Motor neuron (in vitro differentiated cells): ENCODE measurements at regions of chr12 and their contacts with region 1.

Region 1: GRCh38 chr12:63843721-63844390 is 644 bp upstream of the SRGAP1 start:
- ATAC-seq: peak; percentile 86 to 91 (median 89)
- H3K4me3 ChIP-seq: peak overlapping the region; percentile 58 to 96 (median 71)
- H3K27ac ChIP-seq: peak overlapping the region; percentile 13 to 55
- H3K4me1 ChIP-seq: peaks cover 4 to 9% of the 10 kb centered on the region in 2 donors

Region 2: GRCh38 chr12:63888908-63889635 is 45.2 kb after region 1 on chr12:
- in situ Hi-C with region 1: no loop called
- ATAC-seq: peak; percentile 32 to 96 (median 58)
- H3K4me3 ChIP-seq: no peak overlapping the region
- H3K27ac ChIP-seq: no peak overlapping the region
- H3K4me1 ChIP-seq: peaks cover 0 to 7% of the 10 kb centered on the region in 2 donors

Region 3: DNA sequence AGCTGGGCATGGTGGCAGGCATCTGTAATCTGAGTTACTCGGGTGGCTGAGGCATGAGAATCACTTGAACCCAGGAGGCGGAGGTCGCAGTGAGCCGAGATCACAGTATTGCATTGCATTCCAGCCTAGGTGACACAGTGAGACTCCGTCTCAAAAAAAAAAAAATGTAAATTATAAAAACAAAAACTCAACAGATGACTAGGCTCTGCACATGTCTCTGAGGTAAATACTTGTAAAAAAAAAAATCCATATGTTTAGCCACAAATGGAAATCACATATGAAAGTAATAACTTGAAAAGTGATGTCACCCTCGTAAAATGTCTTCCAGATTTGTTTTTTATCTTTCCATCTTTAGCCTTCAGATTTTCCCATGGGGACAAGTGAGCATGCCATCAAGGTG is 293.3 kb after region 1 on chr12:
- in situ Hi-C with region 1: no loop called
- ATAC-seq: no peak
- H3K4me3 ChIP-seq: no peak overlapping the region
- H3K27ac ChIP-seq: no peak overlapping the region
- H3K4me1 ChIP-seq: no peaks in the 10 kb centered on the region

Region 4: DNA sequence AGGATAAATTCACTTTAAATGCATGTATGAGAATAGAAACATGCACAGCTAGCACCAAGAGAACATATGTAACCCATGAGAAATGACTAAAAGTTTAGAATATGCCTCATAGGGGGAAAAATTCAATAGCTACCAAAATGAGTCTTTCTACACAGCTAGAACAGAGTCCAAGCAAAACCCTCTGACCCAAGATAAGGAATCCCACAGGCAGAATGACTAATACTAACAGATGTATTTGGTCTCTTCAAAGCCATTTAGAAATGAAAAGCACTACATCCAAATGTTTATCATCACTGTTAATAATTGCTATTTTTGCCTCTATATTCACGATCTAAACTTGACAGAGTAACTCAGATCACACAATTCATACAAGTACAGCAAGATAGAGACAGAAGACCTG is 334.3 kb after region 1 on chr12:
- in situ Hi-C with region 1: loop called in 1 of 9 experiments (anchors 10 kb)
- ATAC-seq: no peak
- H3K4me3 ChIP-seq: no peak overlapping the region
- H3K27ac ChIP-seq: no peak overlapping the region
- H3K4me1 ChIP-seq: peaks cover 11 to 12% of the 10 kb centered on the region in 2 donors

Region 5: GRCh38 chr12:64236549-64236948 is 392.7 kb after region 1 on chr12:
- in situ Hi-C with region 1: loop called in 1 of 9 experiments (anchors 25 kb)
- ATAC-seq: peak in 1 of 8 experiments; percentile 24
- H3K4me3 ChIP-seq: no peak overlapping the region
- H3K27ac ChIP-seq: no peak overlapping the region
- H3K4me1 ChIP-seq: no peaks in the 10 kb centered on the region

Region 6: DNA sequence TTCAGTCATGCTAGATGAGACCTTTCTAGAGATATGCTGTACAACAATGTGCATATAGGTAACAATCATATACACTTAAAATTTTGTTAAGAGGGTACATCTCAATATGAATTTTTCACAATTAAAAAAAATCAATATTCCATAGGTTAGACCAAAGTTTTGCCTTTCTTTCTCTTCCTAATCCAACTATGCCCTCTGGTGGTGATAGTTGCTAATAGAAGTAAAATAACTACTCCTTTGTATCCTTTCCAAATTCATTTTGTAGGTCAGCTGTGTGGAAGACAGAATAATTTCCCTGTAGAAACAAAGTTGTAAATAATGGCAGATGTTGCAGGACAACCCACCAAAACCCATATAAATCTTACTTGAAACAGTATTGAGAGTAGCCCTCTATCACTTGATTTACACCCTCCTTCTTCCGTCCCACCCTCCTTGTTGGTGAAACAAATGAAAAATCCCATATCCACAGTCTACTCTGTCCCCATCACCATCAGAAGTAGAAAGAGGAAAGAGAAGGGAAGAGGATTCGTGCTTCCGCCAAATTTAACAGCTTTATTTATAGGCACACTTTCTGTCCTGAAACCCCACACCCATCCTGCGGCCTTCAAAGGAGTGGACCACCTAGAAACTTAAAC is 412.4 kb after region 1 on chr12:
- in situ Hi-C with region 1: loop called in 8 of 9 experiments (anchors 10 to 25 kb)
- ATAC-seq: peak in 4 of 8 experiments; percentile 21 to 43 (median 24)
- H3K4me3 ChIP-seq: no peak overlapping the region
- H3K27ac ChIP-seq: no peak overlapping the region
- H3K4me1 ChIP-seq: no peaks in the 10 kb centered on the region

Region 7: GRCh38 chr12:64392221-64392620 is 548.4 kb after region 1 on chr12:
- in situ Hi-C with region 1: loop called in 3 of 9 experiments (anchors 25 kb)
- ATAC-seq: peak in 3 of 8 experiments; percentile 45 to 63 (median 57)
- H3K4me3 ChIP-seq: no peak overlapping the region
- H3K27ac ChIP-seq: no peak overlapping the region
- H3K4me1 ChIP-seq: no peaks in the 10 kb centered on the region